GM12878 (cell line): ENCODE measurements at regions of chrX and their contacts with region 1.

Region 1: GRCh38 chrX:46686003-46686645 is 72.8 kb downstream of the SLC9A7 start:
- DNase-seq: no peak
- ATAC-seq: peak; percentile 87
- H3K4me3 ChIP-seq: no peak overlapping the region
- H3K27ac ChIP-seq: no peak overlapping the region
- H3K4me1 ChIP-seq: peaks cover 19% of the 10 kb centered on the region
- H3K27me3 ChIP-seq: no peaks in the 10 kb centered on the region
- CTCF ChIP-seq: peak; percentile 61 to 79 (median 63)
- EP300 ChIP-seq: no peak
- POLR2A ChIP-seq: no peak
- RAD21 ChIP-seq: peak; percentile 70

Region 2: DNA sequence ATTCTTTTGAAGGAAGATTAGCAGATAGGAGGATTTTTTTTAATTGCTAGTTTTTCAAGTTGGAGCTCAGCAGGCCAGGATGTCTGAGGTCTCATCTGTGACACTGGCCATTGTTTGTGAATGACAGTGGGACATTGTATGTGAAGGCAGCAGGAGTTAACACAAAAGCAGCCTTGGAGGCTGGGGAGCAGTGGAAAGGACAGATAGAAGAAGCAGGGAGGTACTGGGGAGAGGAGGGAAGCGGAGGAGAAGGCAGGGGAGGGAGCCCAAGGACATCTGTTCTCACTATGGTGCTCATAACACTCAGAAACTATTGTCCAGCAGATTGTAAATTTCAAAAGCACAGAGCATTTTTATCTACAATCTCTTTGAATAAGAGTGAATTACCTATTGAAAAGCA is 1231.9 kb before region 1 on chrX:
- CTCF ChIA-PET with region 1: no interaction called
- POLR2A ChIA-PET with region 1: no interaction called
- RAD21 ChIA-PET with region 1: no interaction called
- SMC1A ChIA-PET with region 1: no interaction called
- in situ Hi-C with region 1: no loop called
- intact Hi-C with region 1: no loop called
- DNase-seq: no peak
- ATAC-seq: no peak
- H3K4me3 ChIP-seq: no peak overlapping the region
- H3K27ac ChIP-seq: no peak overlapping the region
- H3K4me1 ChIP-seq: no peaks in the 10 kb centered on the region
- H3K27me3 ChIP-seq: no peaks in the 10 kb centered on the region
- CTCF ChIP-seq: no peak
- EP300 ChIP-seq: no peak
- POLR2A ChIP-seq: no peak
- RAD21 ChIP-seq: no peak

Region 3: DNA sequence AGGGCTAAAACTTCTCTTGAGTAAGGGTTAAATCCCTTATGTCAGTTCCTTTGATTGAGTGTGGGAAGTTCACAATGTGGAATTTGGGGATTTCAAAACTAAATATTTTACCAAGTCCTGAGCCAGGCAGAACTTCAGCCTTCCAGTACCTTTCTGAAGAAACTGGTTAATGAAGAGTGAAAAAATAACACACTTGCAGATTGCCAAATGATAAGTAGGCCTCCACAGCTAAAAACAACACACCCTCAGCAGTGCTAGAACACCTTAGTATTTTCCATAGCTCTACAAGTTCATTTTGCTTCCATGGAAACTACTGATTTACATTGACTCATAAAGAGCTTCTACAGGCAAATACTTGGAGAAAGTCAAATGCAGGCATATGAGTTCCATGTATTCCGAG is 467.8 kb before region 1 on chrX:
- CTCF ChIA-PET with region 1: no interaction called
- POLR2A ChIA-PET with region 1: no interaction called
- RAD21 ChIA-PET with region 1: no interaction called
- SMC1A ChIA-PET with region 1: no interaction called
- in situ Hi-C with region 1: no loop called
- intact Hi-C with region 1: no loop called
- DNase-seq: no peak
- ATAC-seq: no peak
- H3K4me3 ChIP-seq: no peak overlapping the region
- H3K27ac ChIP-seq: no peak overlapping the region
- H3K4me1 ChIP-seq: no peaks in the 10 kb centered on the region
- H3K27me3 ChIP-seq: no peaks in the 10 kb centered on the region; a peak in 1 of 4 replicates
- CTCF ChIP-seq: no peak
- EP300 ChIP-seq: no peak
- POLR2A ChIP-seq: no peak
- RAD21 ChIP-seq: no peak

Region 4: DNA sequence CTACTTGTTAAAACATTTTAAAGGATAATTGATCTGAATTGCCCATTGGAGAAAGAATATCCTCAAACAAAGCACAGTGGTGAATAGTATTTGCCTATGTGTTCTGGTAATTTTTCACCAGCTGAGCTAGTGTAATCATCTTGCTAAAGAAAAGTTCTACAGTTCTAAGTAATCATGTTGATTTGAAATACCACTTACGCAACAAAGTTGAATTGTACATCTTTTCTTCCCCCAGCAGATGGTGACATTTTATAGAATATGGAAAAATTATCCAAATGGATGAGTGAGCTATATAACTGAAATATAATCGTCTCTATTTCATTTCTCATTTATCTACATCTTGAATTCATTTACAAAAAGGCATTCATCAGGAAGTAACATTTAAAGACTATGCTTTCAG is 131.2 kb before region 1 on chrX:
- CTCF ChIA-PET with region 1: interaction called, 8 read pairs
- POLR2A ChIA-PET with region 1: no interaction called
- RAD21 ChIA-PET with region 1: interaction called, 8 read pairs
- SMC1A ChIA-PET with region 1: interaction called, 14 read pairs
- in situ Hi-C with region 1: no loop called
- intact Hi-C with region 1: loop called (anchors 5 kb)
- DNase-seq: no peak
- ATAC-seq: peak; percentile 54
- H3K4me3 ChIP-seq: no peak overlapping the region
- H3K27ac ChIP-seq: no peak overlapping the region
- H3K4me1 ChIP-seq: no peaks in the 10 kb centered on the region
- H3K27me3 ChIP-seq: no peaks in the 10 kb centered on the region
- CTCF ChIP-seq: peak in 2 of 3 experiments; percentile 18 to 52; a peak in 2 of 6 replicates
- EP300 ChIP-seq: no peak
- POLR2A ChIP-seq: no peak
- RAD21 ChIP-seq: peak; percentile 55; the same call in 1 of the 2 replicates

Region 5: DNA sequence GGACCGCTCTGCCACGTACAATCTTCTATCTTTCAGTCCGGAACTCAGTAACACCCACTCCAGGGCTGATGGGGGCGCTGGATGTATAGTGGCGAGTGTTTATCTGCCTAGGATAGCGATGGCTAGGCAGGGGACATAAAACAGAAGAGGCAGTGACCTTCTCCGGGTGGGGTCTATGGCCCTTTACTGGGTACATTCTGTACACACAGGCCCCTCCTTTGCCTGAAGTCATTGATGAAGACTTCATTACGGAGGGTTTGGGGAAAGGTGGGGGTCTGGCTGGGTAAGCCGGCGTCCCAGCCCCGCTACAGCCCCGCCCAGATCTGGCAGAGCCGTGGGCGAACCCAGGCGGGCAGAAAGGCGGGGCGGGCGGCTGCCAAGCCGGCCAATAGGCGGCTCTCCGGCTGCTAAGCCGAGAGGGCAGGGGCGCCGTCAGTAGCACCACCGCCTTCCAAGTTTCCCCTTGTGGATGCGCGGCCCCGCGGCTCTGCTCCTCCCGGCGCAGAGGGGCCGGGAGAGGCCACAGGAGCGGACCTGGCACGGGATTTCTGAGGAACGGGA is 112.7 kb before region 1 on chrX and contains the start of gene CHST7:
- CTCF ChIA-PET with region 1: interaction called, 12 read pairs
- POLR2A ChIA-PET with region 1: no interaction called
- RAD21 ChIA-PET with region 1: interaction called, 4 read pairs
- SMC1A ChIA-PET with region 1: interaction called, 8 read pairs
- in situ Hi-C with region 1: no loop called
- intact Hi-C with region 1: no loop called
- DNase-seq: no peak
- ATAC-seq: peak; percentile 65
- H3K4me3 ChIP-seq: peak within 1 kb of the TSS; percentile 69
- H3K27ac ChIP-seq: peak within 1 kb of the TSS; percentile 80
- H3K4me1 ChIP-seq: peaks cover 26% of the 10 kb centered on the region
- H3K27me3 ChIP-seq: no peaks in the 10 kb centered on the region
- CTCF ChIP-seq: peak in 2 of 3 experiments; percentile 25 to 42; a peak in 3 of 6 replicates
- EP300 ChIP-seq: no peak
- POLR2A ChIP-seq: no peak
- RAD21 ChIP-seq: peak; percentile 38
- polyA plus RNA-seq, gene CHST7: 0.58 to 1.7 TPM

Region 6: DNA sequence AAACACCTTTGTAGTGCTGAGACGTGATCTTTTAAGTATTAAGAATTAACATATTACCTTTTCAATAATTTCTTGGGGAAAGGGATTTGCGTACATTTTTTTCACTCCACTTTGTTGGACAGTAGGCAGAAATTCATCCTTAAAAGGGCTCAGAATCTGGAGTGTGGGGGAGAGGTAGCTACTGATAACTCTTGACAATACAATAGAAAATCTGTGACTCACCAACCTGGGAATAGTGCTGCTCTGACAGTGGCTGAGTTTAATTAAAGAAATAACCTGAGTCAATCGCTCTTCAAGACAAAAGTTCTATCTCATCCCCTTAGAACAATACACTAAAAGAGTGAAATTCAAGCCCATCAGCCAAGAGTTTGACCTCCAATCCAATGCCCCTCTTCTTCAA is 12.6 kb after region 1 on chrX:
- CTCF ChIA-PET with region 1: interaction called, 38 read pairs
- POLR2A ChIA-PET with region 1: interaction called, 4 read pairs
- RAD21 ChIA-PET with region 1: interaction called, 30 read pairs
- SMC1A ChIA-PET with region 1: interaction called, 107 read pairs
- in situ Hi-C with region 1: no loop called
- intact Hi-C with region 1: no loop called
- DNase-seq: no peak
- ATAC-seq: no peak
- H3K4me3 ChIP-seq: no peak overlapping the region
- H3K27ac ChIP-seq: no peak overlapping the region
- H3K4me1 ChIP-seq: peaks cover 19% of the 10 kb centered on the region
- H3K27me3 ChIP-seq: no peaks in the 10 kb centered on the region
- CTCF ChIP-seq: no peak
- EP300 ChIP-seq: no peak
- POLR2A ChIP-seq: no peak
- RAD21 ChIP-seq: no peak

Region 7: GRCh38 chrX:46713672-46714490 is 27.8 kb after region 1 on chrX:
- CTCF ChIA-PET with region 1: interaction called, 9 read pairs
- POLR2A ChIA-PET with region 1: interaction called, 10 read pairs
- RAD21 ChIA-PET with region 1: interaction called, 12 read pairs
- SMC1A ChIA-PET with region 1: interaction called, 107 read pairs
- in situ Hi-C with region 1: no loop called
- intact Hi-C with region 1: loop called (anchors 2 kb)
- DNase-seq: peak; percentile 82
- ATAC-seq: peak; percentile 70
- H3K4me3 ChIP-seq: peak overlapping the region; percentile 33
- H3K27ac ChIP-seq: peak overlapping the region; percentile 89
- H3K4me1 ChIP-seq: peaks cover 60% of the 10 kb centered on the region
- H3K27me3 ChIP-seq: no peaks in the 10 kb centered on the region
- CTCF ChIP-seq: no peak
- EP300 ChIP-seq: peak; percentile 98 to 99
- POLR2A ChIP-seq: no peak
- RAD21 ChIP-seq: no peak

Region 8: DNA sequence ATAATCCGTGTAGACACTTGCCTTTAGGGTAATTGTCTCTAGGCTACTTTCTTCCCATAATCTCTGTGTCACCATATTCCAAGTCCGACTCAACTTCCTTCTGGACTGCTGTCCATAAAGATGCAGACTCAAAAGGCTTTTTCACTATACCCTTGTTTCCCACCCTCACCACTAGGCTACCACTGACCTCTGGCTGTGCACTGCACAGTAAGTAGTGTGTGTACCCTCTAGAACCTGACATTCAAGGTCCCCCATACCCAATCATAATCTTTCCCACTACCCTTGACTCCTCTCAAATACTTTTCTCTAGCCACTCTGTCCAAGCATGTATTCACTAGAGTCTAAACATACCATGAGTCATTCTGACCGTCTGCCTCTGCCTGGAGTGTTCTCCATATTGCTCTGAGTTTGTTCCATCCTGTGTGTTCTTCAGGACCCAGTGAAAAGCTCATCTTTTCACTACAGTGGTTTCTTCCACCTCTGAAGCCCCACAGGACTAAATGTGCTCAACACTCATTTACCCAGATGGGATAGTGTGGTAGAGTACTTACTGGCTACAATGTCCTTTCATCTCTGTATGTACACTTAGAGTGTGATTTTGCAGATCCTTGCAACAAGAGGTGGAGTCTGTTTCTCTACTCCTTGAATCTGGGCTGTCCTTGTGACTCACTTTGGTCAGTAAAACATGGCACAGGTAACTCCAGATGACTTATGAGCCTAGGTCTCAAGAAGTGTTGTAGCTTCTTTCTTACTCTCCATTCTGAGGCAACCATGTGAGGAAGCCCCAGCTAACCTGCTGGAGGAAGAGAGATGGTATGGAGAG is 243.5 kb after region 1 on chrX:
- CTCF ChIA-PET with region 1: no interaction called
- POLR2A ChIA-PET with region 1: no interaction called
- RAD21 ChIA-PET with region 1: no interaction called
- SMC1A ChIA-PET with region 1: no interaction called
- in situ Hi-C with region 1: no loop called
- intact Hi-C with region 1: no loop called
- DNase-seq: no peak
- ATAC-seq: no peak
- H3K4me3 ChIP-seq: no peak overlapping the region
- H3K27ac ChIP-seq: no peak overlapping the region
- H3K4me1 ChIP-seq: no peaks in the 10 kb centered on the region
- H3K27me3 ChIP-seq: peaks cover 0 to 2% of the 10 kb centered on the region in 2 experiments; a peak in 1 of 4 replicates
- CTCF ChIP-seq: no peak
- EP300 ChIP-seq: no peak
- POLR2A ChIP-seq: no peak
- RAD21 ChIP-seq: no peak